ENCODE measurements at regions of chr17 and their contacts with region 1.

Region 1: DNA sequence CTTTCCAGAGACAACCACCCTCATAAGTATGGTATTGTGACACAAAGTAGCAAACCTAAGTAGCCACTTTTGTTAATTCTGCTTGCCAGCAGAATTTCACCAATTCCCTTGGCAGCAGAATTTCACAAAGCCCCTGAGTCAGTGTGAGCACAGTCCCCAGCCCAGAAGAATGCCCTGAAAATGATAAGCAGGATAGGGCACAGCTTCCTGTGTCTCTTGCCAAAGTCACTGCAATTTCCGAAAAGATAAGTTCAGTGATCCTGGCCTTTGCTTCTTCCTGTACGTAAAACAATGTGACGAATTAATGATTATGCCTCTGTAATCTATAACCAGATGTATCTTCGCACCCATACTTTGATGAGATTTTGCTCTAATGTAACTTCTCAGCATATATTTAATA is 16.0 kb upstream of the WIPF2 start:
- DNase-seq: no peak
- ATAC-seq: no peak
- H3K4me3 ChIP-seq: no peak overlapping the region
- H3K27ac ChIP-seq: no peak overlapping the region
- H3K4me1 ChIP-seq: peaks cover 5% of the 10 kb centered on the region
- H3K27me3 ChIP-seq: no peaks in the 10 kb centered on the region
- CTCF ChIP-seq: no peak
- POLR2A ChIP-seq: no peak

Region 2: GRCh38 chr17:40041196-40041595 is 161.9 kb before region 1 on chr17:
- intact Hi-C with region 1: no loop called
- DNase-seq: no peak
- ATAC-seq: no peak
- H3K4me3 ChIP-seq: no peak overlapping the region
- H3K27ac ChIP-seq: no peak overlapping the region
- H3K4me1 ChIP-seq: peaks cover 13% of the 10 kb centered on the region
- H3K27me3 ChIP-seq: no peaks in the 10 kb centered on the region
- CTCF ChIP-seq: no peak
- POLR2A ChIP-seq: no peak

Region 3: GRCh38 chr17:40290629-40291287 is 87.6 kb after region 1 on chr17:
- intact Hi-C with region 1: loop called (anchors 5 kb)
- DNase-seq: peak; percentile 57 to 86 (median 68)
- ATAC-seq: no peak
- H3K4me3 ChIP-seq: no peak overlapping the region
- H3K27ac ChIP-seq: no peak overlapping the region
- H3K4me1 ChIP-seq: peaks cover 24% of the 10 kb centered on the region
- H3K27me3 ChIP-seq: no peaks in the 10 kb centered on the region
- CTCF ChIP-seq: peak; percentile 13 to 79 (median 69)
- POLR2A ChIP-seq: no peak

Region 4: GRCh38 chr17:40615295-40615988 is 412.3 kb after region 1 on chr17:
- intact Hi-C with region 1: no loop called
- DNase-seq: peak; percentile 41 to 66 (median 64)
- ATAC-seq: peak; percentile 64
- H3K4me3 ChIP-seq: no peak overlapping the region
- H3K27ac ChIP-seq: no peak overlapping the region
- H3K4me1 ChIP-seq: no peaks in the 10 kb centered on the region
- H3K27me3 ChIP-seq: peaks cover 0 to 4% of the 10 kb centered on the region in 2 donors
- CTCF ChIP-seq: peak in 5 of 7 experiments; percentile 25 to 66 (median 61)
- POLR2A ChIP-seq: no peak

Measured in body of pancreas (tissue), 4 donors.